ENCODE measurements at regions of chr12 and their contacts with region 1.

Region 1: GRCh38 chr12:104520242-104520900 is 63.6 kb downstream of the CHST11 start:
- DNase-seq: peak; percentile 53
- ATAC-seq: peak; percentile 83
- H3K4me3 Mint-ChIP-seq: peak overlapping the region; percentile 75
- H3K27ac Mint-ChIP-seq: peak overlapping the region; percentile 79
- H3K4me1 Mint-ChIP-seq: peaks cover 97% of the 10 kb centered on the region
- H3K27me3 Mint-ChIP-seq: no peaks in the 10 kb centered on the region
- CTCF ChIP-seq: no peak

Region 2: GRCh38 chr12:104478396-104479122 is 41.8 kb before region 1 on chr12:
- CTCF ChIA-PET with region 1: interaction called, 4 read pairs
- POLR2A ChIA-PET with region 1: interaction called, 9 read pairs
- intact Hi-C with region 1: loop called (anchors 5 kb)
- DNase-seq: no peak
- ATAC-seq: peak; percentile 84
- H3K4me3 Mint-ChIP-seq: peak overlapping the region; percentile 87
- H3K27ac Mint-ChIP-seq: peak overlapping the region; percentile 90
- H3K4me1 Mint-ChIP-seq: peaks cover 92% of the 10 kb centered on the region
- H3K27me3 Mint-ChIP-seq: no peaks in the 10 kb centered on the region
- CTCF ChIP-seq: no peak

Region 3: DNA sequence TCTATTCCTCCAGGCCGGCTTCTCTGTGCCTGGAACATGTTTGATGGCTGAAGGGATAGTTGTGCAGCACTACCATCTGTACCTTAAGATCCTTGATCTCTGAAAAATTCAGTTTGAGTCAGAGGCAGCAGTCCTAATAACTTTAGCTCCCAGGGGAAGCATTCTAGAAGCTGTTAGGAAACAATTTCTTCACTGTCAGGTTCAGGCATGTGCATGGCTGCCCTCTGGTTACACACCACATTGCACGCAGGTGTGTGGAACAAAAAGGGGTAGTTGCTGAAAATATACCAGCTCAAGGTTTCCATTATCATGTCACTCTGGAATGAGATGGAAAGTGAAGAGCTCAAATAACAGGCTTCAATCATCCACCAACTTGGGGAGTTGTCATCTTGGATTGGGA is 16.5 kb after region 1 on chr12:
- CTCF ChIA-PET with region 1: no interaction called
- POLR2A ChIA-PET with region 1: interaction called, 5 read pairs
- intact Hi-C with region 1: loop called (anchors 2 kb)
- DNase-seq: no peak
- ATAC-seq: peak; percentile 82
- H3K4me3 Mint-ChIP-seq: no peak overlapping the region
- H3K27ac Mint-ChIP-seq: no peak overlapping the region
- H3K4me1 Mint-ChIP-seq: peaks cover 89% of the 10 kb centered on the region
- H3K27me3 Mint-ChIP-seq: no peaks in the 10 kb centered on the region
- CTCF ChIP-seq: no peak

Region 4: DNA sequence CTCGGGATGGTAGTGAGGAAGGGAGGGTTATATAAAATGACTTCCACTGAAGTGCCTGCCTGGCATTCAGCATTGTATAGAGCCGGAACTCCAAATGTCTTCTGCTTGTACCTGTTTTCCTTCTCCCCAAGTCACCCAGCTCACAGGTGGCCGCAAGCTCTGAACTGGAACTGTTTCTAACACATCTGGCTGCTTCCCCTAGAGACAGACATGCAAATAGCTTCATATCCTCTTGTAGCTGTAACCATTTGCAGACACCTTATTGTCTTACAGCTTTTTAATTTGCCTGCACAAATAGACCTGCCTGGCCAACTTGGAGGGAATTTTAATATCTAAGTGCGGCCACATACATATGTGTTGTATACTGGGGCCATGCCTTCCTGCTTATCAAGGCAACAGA is 62.4 kb after region 1 on chr12:
- CTCF ChIA-PET with region 1: no interaction called
- POLR2A ChIA-PET with region 1: interaction called, 3 read pairs
- intact Hi-C with region 1: loop called (anchors 5 kb)
- DNase-seq: peak; percentile 26
- ATAC-seq: peak; percentile 86
- H3K4me3 Mint-ChIP-seq: peak overlapping the region; percentile 56
- H3K27ac Mint-ChIP-seq: peak overlapping the region; percentile 70
- H3K4me1 Mint-ChIP-seq: peaks cover 89% of the 10 kb centered on the region
- H3K27me3 Mint-ChIP-seq: no peaks in the 10 kb centered on the region
- CTCF ChIP-seq: no peak

Measured in activated B cell treated with CpG ODN at 0.5 μM for 24 hours (primary cell).